IMR-90 (cell line): ENCODE measurements at regions of chr12 and their contacts with region 1.

Region 1: DNA sequence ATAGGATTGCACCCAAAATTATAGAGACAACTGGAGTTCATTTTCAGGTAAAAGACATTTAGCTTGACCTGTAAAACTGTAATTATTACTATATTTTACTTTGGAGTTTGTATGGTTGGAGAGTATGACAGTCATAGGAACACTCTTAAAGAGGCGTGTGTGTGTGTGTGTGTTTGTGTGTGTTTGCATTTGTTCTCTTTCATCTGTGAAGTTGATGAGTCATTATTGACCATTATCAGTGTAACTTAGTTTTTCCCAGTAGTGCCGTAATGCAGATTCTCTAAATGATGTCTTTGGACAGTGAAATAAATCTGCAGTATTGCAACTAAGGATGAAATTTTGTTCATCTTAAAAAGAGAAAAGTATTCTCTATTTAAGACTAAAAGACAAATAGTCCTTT is 13.0 kb downstream of the WASHC4 start:
- DNase-seq: peak; percentile 16
- ATAC-seq: no peak
- H3K4me3 ChIP-seq: no peak overlapping the region
- H3K27ac ChIP-seq: no peak overlapping the region
- H3K4me1 ChIP-seq: no peaks in the 10 kb centered on the region
- H3K27me3 ChIP-seq: no peaks in the 10 kb centered on the region
- CTCF ChIP-seq: no peak
- POLR2A ChIP-seq: no peak
- RAD21 ChIP-seq: no peak

Region 2: GRCh38 chr12:104986022-104986941 is 134.3 kb before region 1 on chr12 and contains the start of gene NOPCHAP1:
- CTCF ChIA-PET with region 1: no interaction called
- POLR2A ChIA-PET with region 1: no interaction called
- dilution Hi-C with region 1: no loop called
- in situ Hi-C with region 1: no loop called
- intact Hi-C with region 1: no loop called
- DNase-seq: peak; percentile 75
- ATAC-seq: peak; percentile 100
- H3K4me3 ChIP-seq: peak within 1 kb of the TSS; percentile 96
- H3K27ac ChIP-seq: peak within 1 kb of the TSS; percentile 95
- H3K4me1 ChIP-seq: no peaks in the 10 kb centered on the region
- H3K27me3 ChIP-seq: peaks cover 3% of the 10 kb centered on the region
- CTCF ChIP-seq: no peak
- POLR2A ChIP-seq: no peak
- RAD21 ChIP-seq: no peak
- total RNA-seq, gene NOPCHAP1: 5.3 and 5.6 TPM in 2 replicates

Region 3: DNA sequence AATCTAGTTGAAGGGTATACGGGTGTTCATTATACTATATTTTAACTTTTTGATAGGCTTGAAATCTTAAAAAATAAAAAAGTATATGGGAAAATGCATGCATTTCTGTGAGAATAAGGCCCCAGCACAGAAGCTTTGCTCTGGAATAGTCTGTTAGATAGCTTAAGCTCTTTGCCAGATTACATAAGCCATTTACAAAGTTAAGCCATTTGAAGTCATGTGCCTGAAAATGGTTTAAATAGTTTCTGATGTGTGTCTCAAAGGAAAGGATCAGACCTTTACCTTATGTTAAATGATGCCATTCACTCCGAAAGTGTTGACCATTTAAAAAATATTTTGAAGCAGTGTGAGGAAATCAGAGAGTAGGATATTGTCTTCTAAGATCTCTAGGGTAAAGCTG is 38.3 kb after region 1 on chr12:
- CTCF ChIA-PET with region 1: no interaction called
- POLR2A ChIA-PET with region 1: no interaction called
- dilution Hi-C with region 1: no loop called
- in situ Hi-C with region 1: no loop called
- intact Hi-C with region 1: loop called (anchors 5 kb)
- DNase-seq: no peak
- ATAC-seq: no peak
- H3K4me3 ChIP-seq: no peak overlapping the region
- H3K27ac ChIP-seq: no peak overlapping the region
- H3K4me1 ChIP-seq: no peaks in the 10 kb centered on the region
- H3K27me3 ChIP-seq: no peaks in the 10 kb centered on the region
- CTCF ChIP-seq: no peak
- POLR2A ChIP-seq: no peak
- RAD21 ChIP-seq: no peak

Region 4: DNA sequence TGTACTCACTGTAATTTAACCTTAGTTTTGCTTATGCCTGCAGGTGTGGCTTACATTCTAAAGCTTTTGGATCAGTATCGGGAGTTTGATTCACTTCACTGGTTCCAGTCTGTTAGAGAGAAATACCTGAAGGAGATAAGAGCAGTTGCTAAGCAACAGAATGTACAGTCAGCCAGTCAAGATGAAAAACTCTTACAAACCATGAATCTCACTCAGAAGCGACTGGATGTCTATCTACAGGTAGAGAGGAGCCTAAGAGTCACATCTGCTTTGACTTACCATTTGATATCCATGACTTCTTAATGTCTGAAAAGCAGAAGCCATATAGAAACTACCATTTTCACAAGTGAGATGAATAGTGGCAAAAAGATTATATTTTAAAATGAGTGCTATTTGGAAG is 43.5 kb after region 1 on chr12:
- CTCF ChIA-PET with region 1: no interaction called
- POLR2A ChIA-PET with region 1: no interaction called
- dilution Hi-C with region 1: no loop called
- in situ Hi-C with region 1: no loop called
- intact Hi-C with region 1: loop called (anchors 5 kb)
- DNase-seq: no peak
- ATAC-seq: no peak
- H3K4me3 ChIP-seq: no peak overlapping the region
- H3K27ac ChIP-seq: no peak overlapping the region
- H3K4me1 ChIP-seq: peaks cover 4% of the 10 kb centered on the region
- H3K27me3 ChIP-seq: no peaks in the 10 kb centered on the region
- CTCF ChIP-seq: no peak
- POLR2A ChIP-seq: no peak
- RAD21 ChIP-seq: no peak